Common myeloid progenitor, CD34-positive (primary cell): ENCODE measurements at regions of chr3 and their contacts with region 1.

Region 1: GRCh38 chr3:138960417-138960852 is 13.4 kb downstream of the FOXL2NB start:
- DNase-seq: peak in 1 of 3 donors; percentile 18
- H3K4me3 ChIP-seq: peak overlapping the region in 6 of 7 experiments; percentile 7 to 68 (median 53)
- H3K27ac ChIP-seq: no peak overlapping the region
- H3K4me1 ChIP-seq: peaks cover 0 to 12% (median 9%) of the 10 kb centered on the region in 4 experiments
- H3K27me3 ChIP-seq: peaks cover 0 to 43% (median 12%) of the 10 kb centered on the region in 5 experiments

Region 2: DNA sequence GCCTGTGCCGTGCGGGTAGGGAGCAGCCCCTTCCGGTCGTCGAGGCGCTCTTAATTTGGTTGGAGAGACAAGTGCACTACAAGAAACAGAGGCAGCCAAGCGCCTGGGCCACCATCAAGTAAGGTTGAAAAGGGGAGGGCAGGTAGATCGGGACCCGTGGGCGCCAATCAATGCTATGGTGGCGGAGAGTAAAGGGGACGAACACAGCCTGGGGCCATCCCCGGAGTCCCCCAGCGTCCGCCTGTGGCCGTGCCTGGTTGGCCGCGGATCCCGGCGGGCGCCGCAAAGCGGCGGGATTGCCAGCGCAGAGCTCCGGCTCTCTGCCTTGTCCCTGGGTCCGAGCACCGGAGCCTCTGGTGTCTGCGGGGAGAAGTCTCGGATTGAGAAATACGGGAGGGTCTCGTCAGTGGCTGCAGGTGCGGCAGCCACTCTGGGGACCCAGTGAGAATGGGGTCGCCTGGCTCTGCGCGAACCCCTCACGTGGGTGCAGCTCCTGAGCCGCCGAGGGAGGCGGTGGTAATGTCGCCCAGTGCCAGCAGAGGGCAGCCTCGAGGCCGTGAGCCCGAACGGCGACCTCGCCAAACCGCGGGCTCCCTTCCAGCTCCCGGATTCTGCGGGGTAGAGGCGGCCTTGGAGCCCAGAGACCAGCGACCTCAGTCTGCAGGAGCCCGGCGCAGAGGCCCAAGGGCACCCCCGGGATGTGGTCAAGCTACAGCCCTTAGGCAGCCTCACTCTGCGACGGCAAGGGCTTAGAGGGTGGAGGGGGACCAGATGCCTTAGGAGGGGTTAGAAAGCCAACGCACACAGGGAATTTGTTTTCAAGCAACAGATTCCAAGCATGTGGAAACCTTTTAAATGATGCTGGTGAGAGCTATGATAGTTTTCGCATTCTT is 24.3 kb before region 1 on chr3:
- CTCF ChIA-PET with region 1: interaction called, 10 read pairs
- POLR2A ChIA-PET with region 1: no interaction called
- DNase-seq: peak; percentile 59 to 72 (median 70)
- H3K4me3 ChIP-seq: peak overlapping the region; percentile 40 to 76 (median 58)
- H3K27ac ChIP-seq: no peak overlapping the region
- H3K4me1 ChIP-seq: peaks cover 2 to 46% (median 36%) of the 10 kb centered on the region in 4 experiments
- H3K27me3 ChIP-seq: peaks cover 4 to 76% (median 48%) of the 10 kb centered on the region in 5 experiments